ENCODE measurements at regions of chrX and their contacts with region 1.

Region 1: DNA sequence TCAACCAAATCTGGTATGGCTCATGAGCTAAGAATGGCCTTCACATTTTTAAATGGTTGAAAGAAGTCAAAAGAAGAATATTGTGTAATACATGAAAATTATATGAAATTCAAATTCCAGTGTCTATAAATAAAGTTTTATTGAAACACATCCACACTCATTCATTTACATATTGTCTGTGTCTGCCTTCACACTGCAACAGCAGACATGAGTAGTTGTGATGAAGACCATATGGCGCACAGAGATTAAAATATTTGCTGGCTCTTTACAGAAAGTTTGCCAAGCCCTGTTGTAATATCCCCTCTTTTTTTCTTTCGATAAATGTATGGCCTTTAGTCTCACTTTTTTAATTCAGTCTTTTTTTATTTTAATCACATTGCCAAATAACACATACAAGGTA is 222.1 kb downstream of the KLHL13 start:
- DNase-seq: no peak
- ATAC-seq: no peak

Region 2: GRCh38 chrX:117808413-117808812 is 86.1 kb before region 1 on chrX:
- intact Hi-C with region 1: loop called in 1 of 2 experiments (anchors 10 kb)
- DNase-seq: no peak
- ATAC-seq: no peak

Region 3: GRCh38 chrX:117839544-117839943 is 55.0 kb before region 1 on chrX:
- intact Hi-C with region 1: no loop called
- DNase-seq: no peak
- ATAC-seq: no peak

Region 4: DNA sequence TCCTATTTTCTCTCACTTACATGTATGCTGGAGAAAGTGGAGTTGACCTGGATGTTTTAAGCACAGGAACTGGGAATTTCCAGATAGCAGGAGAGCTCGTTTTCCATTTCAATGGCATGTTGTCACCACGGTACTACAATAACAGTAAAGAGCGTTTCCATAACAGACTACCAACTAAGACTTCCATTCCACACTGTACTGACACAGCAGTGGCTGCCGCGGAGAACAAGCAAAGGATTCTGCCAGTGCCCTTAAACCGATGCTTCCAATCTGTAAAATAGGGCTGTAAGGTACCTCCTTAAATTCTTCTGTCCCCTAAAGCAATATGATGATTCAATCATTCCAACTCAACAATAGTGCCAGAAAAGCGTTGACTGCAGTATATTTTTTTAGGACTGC is 78.2 kb after region 1 on chrX:
- intact Hi-C with region 1: no loop called
- DNase-seq: no peak
- ATAC-seq: peak in 1 of 2 donors; percentile 37